Right cardiac atrium (tissue), 5 donors: ENCODE measurements at regions of chr7 and their contacts with region 1.

Region 1: GRCh38 chr7:55449992-55450535 is 84.9 kb downstream of the LANCL2 start:
- DNase-seq: peak in 1 of 3 donors; percentile 14
- ATAC-seq: no peak
- H3K4me3 ChIP-seq: no peak overlapping the region
- H3K27ac ChIP-seq: no peak overlapping the region
- H3K4me1 ChIP-seq: no peaks in the 10 kb centered on the region
- H3K27me3 ChIP-seq: no peaks in the 10 kb centered on the region

Region 2: GRCh38 chr7:55504093-55504859 is 54.2 kb after region 1 on chr7:
- intact Hi-C with region 1: loop called in 1 of 4 experiments (anchors 5 kb)
- DNase-seq: no peak
- ATAC-seq: peak in 1 of 2 donors; percentile 17
- H3K4me3 ChIP-seq: no peak overlapping the region
- H3K27ac ChIP-seq: no peak overlapping the region
- H3K4me1 ChIP-seq: peaks cover 5% of the 10 kb centered on the region
- H3K27me3 ChIP-seq: no peaks in the 10 kb centered on the region

Region 3: GRCh38 chr7:55794527-55794926 is 344.5 kb after region 1 on chr7:
- intact Hi-C with region 1: no loop called
- DNase-seq: no peak
- ATAC-seq: no peak
- H3K4me3 ChIP-seq: no peak overlapping the region
- H3K27ac ChIP-seq: no peak overlapping the region
- H3K4me1 ChIP-seq: no peaks in the 10 kb centered on the region
- H3K27me3 ChIP-seq: no peaks in the 10 kb centered on the region